Cardiac septum (tissue), 1 donor: ENCODE measurements at regions of chr6 and their contacts with region 1.

Region 1: GRCh38 chr6:75368151-75368779 is 83.7 kb upstream of the TMEM30A start:
- DNase-seq: no peak

Region 2: GRCh38 chr6:75230484-75231325 is 137.6 kb before region 1 on chr6:
- intact Hi-C with region 1: no loop called
- DNase-seq: no peak

Region 3: GRCh38 chr6:75296811-75297779 is 71.2 kb before region 1 on chr6:
- intact Hi-C with region 1: loop called (anchors 5 kb)
- DNase-seq: no peak

Region 4: GRCh38 chr6:75437421-75437891 is 69.2 kb after region 1 on chr6:
- intact Hi-C with region 1: loop called (anchors 5 kb)
- DNase-seq: no peak

Region 5: GRCh38 chr6:75504465-75505228 is 136.4 kb after region 1 on chr6:
- intact Hi-C with region 1: loop called (anchors 5 kb)
- DNase-seq: no peak